Caco-2 (cell line): ENCODE measurements at regions of chr20 and their contacts with region 1.

Region 1: DNA sequence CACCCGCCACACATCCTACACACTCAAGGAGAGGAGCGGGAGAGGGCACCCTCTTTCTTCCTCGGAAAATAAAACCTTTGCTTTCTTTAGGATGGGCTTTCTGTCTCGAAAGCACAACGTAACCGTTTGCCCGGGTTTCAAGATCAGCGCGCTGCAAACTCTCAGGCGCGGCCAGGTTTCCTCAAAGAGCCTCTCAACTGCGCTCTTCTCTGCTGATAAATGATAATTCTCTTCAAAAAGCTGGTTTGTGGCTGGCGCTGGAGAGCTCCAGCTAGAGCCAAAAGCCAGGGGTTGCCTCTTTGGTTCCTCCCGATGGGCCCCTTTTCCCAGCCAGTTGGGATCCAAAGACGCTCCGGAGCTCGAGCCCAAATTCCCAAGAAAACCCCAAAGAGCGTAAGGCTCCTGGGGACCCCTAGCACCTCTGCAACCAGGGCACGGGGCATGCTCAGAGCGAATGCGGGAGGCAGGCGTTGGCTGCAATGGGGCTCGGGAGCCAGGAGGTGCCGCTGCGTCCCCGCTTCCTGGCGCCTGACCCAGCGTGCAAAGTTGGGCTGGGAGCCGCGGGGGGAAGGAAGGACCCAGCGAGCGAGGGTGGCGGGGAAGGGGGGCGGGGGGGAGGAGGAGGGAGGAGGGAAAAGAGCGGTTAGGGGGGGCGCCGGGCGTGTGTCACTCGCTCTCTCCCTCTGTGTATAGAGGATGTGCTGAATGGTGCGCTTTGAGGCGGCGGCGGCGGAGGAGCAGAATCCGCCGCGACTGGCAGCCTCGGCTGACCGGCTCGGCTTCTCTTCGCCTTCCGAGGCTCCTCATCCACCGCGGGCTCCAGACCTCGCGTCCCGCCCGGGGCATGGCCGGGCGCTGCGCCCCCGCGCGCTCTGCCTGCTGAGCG is at the start of gene PLCB1:
- DNase-seq: peak; percentile 87 to 94
- H3K4me3 ChIP-seq: peak within 1 kb of the TSS; percentile 76
- H3K4me3 Mint-ChIP-seq: peak within 1 kb of the TSS; percentile 84
- H3K27ac Mint-ChIP-seq: peak within 1 kb of the TSS; percentile 93
- H3K4me1 ChIP-seq: peaks cover 53% of the 10 kb centered on the region
- H3K4me1 Mint-ChIP-seq: peaks cover 50% of the 10 kb centered on the region
- H3K27me3 ChIP-seq: no peaks in the 10 kb centered on the region
- H3K27me3 Mint-ChIP-seq: no peaks in the 10 kb centered on the region
- CTCF ChIP-seq: peak; percentile 90 to 96
- total RNA-seq, gene PLCB1: 101 and 105 TPM in 2 replicates

Region 2: DNA sequence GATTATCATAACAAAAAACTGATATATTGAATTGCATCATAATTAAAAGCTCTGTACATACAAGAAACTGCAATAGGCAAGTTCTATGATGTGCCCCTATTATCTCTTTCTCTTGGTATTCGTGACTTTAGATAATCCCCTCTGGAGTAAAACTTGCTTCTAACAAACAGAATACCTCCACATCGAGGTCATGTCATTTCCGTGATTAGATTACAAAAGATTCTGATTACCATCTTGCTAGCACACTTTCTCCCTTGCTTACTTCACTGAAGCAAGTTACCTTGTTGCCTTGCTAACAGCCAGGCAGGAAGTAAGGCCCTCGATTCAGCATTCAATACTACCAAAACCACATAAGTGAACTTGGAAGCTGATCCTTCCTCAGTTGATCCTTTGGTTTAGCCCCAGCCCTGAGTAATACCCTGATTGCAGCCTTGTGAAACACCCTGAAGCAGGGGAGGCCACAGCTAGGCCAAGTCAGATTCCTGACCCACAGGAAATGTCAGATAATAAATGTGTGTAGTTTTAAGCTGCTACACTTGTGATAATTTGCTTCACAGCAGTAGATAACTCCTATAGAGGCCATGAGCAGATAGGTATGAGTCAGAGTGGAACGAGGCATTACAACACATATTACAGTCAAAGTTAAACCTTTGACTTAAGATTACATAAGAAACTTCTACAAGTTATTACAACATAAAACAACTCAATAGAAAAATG is 58.6 kb before region 1 on chr20:
- CTCF ChIA-PET with region 1: no interaction called
- POLR2A ChIA-PET with region 1: interaction called, 3 read pairs
- intact Hi-C with region 1: loop called (anchors 1 kb)
- DNase-seq: peak; percentile 73 to 87
- H3K4me3 ChIP-seq: no peak overlapping the region
- H3K4me3 Mint-ChIP-seq: peak overlapping the region; percentile 40
- H3K27ac Mint-ChIP-seq: peak overlapping the region; percentile 85
- H3K4me1 ChIP-seq: peaks cover 28% of the 10 kb centered on the region
- H3K4me1 Mint-ChIP-seq: peaks cover 30% of the 10 kb centered on the region
- H3K27me3 ChIP-seq: no peaks in the 10 kb centered on the region
- H3K27me3 Mint-ChIP-seq: no peaks in the 10 kb centered on the region
- CTCF ChIP-seq: no peak

Region 3: DNA sequence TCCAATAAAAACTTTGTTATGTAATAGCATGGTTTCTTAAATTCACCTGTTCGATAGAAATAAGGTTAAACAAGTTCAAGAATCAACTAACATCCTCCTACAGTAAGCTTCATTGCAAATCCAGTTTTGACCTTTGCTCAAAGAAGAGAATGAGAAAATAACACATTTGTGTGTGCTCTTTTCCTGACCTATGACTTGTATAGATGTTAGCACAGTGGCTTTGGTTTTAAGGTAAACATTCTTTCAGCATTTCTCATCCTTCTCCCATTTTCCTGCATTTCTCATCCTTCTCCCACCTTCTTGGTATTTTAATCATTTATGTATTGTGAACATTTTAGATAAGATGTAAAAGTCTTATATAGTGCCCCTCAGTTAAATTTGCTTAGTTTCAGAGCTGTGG is 74.2 kb after region 1 on chr20:
- CTCF ChIA-PET with region 1: no interaction called
- POLR2A ChIA-PET with region 1: no interaction called
- intact Hi-C with region 1: loop called (anchors 1 kb)
- DNase-seq: peak in 1 of 2 experiments; percentile 33
- H3K4me3 ChIP-seq: no peak overlapping the region
- H3K4me3 Mint-ChIP-seq: peak overlapping the region; percentile 54
- H3K27ac Mint-ChIP-seq: peak overlapping the region; percentile 43
- H3K4me1 ChIP-seq: peaks cover 59% of the 10 kb centered on the region
- H3K4me1 Mint-ChIP-seq: peaks cover 49% of the 10 kb centered on the region
- H3K27me3 ChIP-seq: no peaks in the 10 kb centered on the region
- H3K27me3 Mint-ChIP-seq: no peaks in the 10 kb centered on the region
- CTCF ChIP-seq: no peak

Region 4: GRCh38 chr20:8361006-8361652 is 229.3 kb after region 1 on chr20:
- CTCF ChIA-PET with region 1: no interaction called
- POLR2A ChIA-PET with region 1: no interaction called
- intact Hi-C with region 1: loop called (anchors 1 kb)
- DNase-seq: no peak
- H3K4me3 ChIP-seq: no peak overlapping the region
- H3K4me3 Mint-ChIP-seq: no peak overlapping the region
- H3K27ac Mint-ChIP-seq: no peak overlapping the region
- H3K4me1 ChIP-seq: peaks cover 13% of the 10 kb centered on the region
- H3K4me1 Mint-ChIP-seq: no peaks in the 10 kb centered on the region
- H3K27me3 ChIP-seq: no peaks in the 10 kb centered on the region
- H3K27me3 Mint-ChIP-seq: no peaks in the 10 kb centered on the region
- CTCF ChIP-seq: no peak

Region 5: DNA sequence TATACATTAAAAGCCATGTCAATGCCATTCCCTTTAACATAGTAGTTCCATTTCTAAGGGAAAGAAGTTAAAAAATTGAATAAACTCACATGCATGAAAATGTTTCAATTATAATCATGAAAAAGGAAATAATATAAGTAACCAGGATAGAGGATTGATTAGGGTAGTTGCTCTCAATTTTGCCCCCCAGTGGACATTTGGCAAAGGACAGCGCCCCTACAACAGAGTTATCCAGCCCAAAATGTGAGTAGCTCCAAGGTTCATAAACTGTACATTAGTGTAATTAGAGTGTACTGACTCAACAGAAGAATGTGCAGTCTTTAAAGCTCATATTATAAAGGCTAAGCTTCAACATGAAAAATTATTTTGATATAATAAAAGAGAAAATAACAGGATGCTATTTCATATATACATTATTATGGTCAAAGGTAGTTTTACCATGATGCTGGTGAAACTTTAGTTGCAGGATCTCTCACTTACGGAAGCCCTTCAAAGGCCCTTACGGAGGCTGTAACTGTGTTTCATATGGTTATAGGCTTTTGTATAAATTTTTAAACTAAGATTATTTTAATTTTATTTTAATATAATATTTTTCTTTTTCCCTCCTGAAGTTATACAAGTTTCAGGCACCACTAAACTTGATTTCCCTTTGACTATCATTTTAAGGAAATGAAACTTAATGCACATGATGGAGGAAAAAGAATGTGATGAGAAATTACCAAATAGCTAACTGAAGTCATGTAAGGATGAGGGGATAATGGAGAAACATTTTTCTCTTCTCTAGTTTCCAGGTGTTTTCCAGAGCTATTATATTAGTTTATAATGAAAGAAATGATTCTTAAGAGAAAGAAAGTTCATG is 403.8 kb after region 1 on chr20:
- CTCF ChIA-PET with region 1: no interaction called
- POLR2A ChIA-PET with region 1: interaction called, 6 read pairs
- intact Hi-C with region 1: loop called (anchors 1 kb)
- DNase-seq: peak in 1 of 2 experiments; percentile 55
- H3K4me3 ChIP-seq: no peak overlapping the region
- H3K4me3 Mint-ChIP-seq: no peak overlapping the region
- H3K27ac Mint-ChIP-seq: no peak overlapping the region
- H3K4me1 ChIP-seq: no peaks in the 10 kb centered on the region
- H3K4me1 Mint-ChIP-seq: no peaks in the 10 kb centered on the region
- H3K27me3 ChIP-seq: no peaks in the 10 kb centered on the region
- H3K27me3 Mint-ChIP-seq: no peaks in the 10 kb centered on the region
- CTCF ChIP-seq: peak; percentile 75 to 77